GM12878 (cell line): ENCODE measurements at regions of chr10 and their contacts with region 1.

Region 1: GRCh38 chr10:114388275-114388674 is 16.0 kb downstream of the AFAP1L2 start:
- DNase-seq: peak; percentile 66
- ATAC-seq: peak; percentile 69
- H3K4me3 ChIP-seq: no peak overlapping the region
- H3K27ac ChIP-seq: peak overlapping the region; percentile 75
- H3K4me1 ChIP-seq: peaks cover 26% of the 10 kb centered on the region
- H3K27me3 ChIP-seq: no peaks in the 10 kb centered on the region
- CTCF ChIP-seq: no peak
- EP300 ChIP-seq: no peak
- POLR2A ChIP-seq: no peak
- RAD21 ChIP-seq: no peak

Region 2: GRCh38 chr10:114195079-114195478 is 193.2 kb before region 1 on chr10:
- CTCF ChIA-PET with region 1: no interaction called
- POLR2A ChIA-PET with region 1: no interaction called
- RAD21 ChIA-PET with region 1: no interaction called
- SMC1A ChIA-PET with region 1: no interaction called
- in situ Hi-C with region 1: no loop called
- intact Hi-C with region 1: no loop called
- DNase-seq: no peak
- ATAC-seq: peak; percentile 80
- H3K4me3 ChIP-seq: no peak overlapping the region; the same call in 1 of the 2 replicates
- H3K27ac ChIP-seq: no peak overlapping the region
- H3K4me1 ChIP-seq: no peaks in the 10 kb centered on the region
- H3K27me3 ChIP-seq: no peaks in the 10 kb centered on the region; a peak in 1 of 4 replicates
- CTCF ChIP-seq: no peak
- EP300 ChIP-seq: no peak; a peak in 1 of 4 replicates
- POLR2A ChIP-seq: no peak
- RAD21 ChIP-seq: no peak

Region 3: DNA sequence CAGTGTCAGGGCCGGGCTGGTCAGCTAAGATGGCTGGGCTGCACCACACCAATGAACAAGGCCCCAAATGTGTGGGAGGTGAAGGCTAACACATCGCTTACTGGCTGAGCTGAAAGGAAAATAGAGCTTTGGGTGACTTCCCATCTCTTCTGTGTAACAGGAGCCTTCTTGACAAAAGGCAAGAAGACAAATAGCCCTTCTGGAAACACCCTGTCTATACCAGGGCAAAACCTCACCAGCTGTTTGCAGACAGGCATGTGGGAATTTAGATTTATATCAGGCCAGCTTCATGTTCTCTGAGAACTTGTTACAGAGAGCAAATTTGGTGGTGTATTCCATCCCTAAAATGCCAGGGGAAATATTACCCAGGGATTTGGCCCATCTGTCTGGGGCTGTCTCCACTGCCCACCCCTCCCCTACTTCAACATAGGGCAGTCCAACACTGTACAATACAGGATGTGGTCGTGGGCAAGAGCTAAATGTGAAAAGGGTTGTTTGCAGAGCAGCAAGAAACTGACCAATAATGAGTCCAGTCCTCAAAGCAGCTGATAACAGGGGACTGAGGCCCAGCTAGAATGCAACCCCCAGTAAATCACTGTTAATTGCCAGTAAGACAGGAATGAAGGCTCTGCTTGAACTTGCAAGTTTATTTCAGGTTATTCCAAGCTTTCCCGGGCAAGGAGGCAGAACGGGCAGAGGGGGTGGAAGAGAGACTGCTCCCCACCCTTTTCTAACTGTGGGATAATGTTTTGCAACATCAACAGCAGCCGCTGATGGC is 21.0 kb before region 1 on chr10:
- CTCF ChIA-PET with region 1: interaction called, 4 read pairs
- POLR2A ChIA-PET with region 1: no interaction called
- RAD21 ChIA-PET with region 1: interaction called, 8 read pairs
- SMC1A ChIA-PET with region 1: interaction called, 17 read pairs
- in situ Hi-C with region 1: no loop called
- intact Hi-C with region 1: no loop called
- DNase-seq: no peak
- ATAC-seq: peak; percentile 85
- H3K4me3 ChIP-seq: no peak overlapping the region
- H3K27ac ChIP-seq: no peak overlapping the region
- H3K4me1 ChIP-seq: peaks cover 10% of the 10 kb centered on the region
- H3K27me3 ChIP-seq: no peaks in the 10 kb centered on the region
- CTCF ChIP-seq: no peak
- EP300 ChIP-seq: no peak
- POLR2A ChIP-seq: no peak
- RAD21 ChIP-seq: no peak

Region 4: DNA sequence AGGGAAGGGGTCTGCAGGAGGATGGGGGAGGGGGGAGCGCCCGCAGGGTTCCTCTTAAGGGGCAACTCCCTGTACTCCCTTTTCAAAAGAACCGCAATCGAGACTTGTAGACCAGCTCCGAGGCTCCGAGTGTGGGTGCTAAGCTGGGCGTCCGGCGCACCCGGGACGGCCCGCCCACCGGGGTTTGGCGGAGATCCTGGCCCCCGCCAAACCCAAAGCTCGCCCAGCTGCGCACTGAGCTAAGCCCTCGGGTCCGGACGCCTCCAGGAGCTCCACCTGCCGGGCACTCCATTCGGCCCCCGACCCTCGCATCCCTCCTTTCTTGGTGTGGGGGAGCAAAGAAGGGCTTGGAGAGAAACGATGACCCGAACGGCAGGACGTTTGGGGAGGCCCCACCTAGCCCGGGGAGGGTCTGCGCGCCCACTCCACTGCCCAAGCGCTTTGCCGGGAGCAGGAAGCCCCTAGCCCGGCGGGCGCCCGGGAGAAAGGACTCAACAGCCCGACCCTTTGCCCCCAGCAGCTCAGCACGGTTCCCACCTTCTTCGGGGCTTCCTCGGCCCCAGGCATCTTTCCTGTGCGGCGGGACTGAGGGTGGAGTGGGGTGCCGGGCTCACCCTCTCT is 15.4 kb after region 1 on chr10:
- CTCF ChIA-PET with region 1: interaction called, 12 read pairs
- POLR2A ChIA-PET with region 1: interaction called, 3 read pairs
- RAD21 ChIA-PET with region 1: interaction called, 27 read pairs
- SMC1A ChIA-PET with region 1: interaction called, 26 read pairs
- in situ Hi-C with region 1: no loop called
- intact Hi-C with region 1: no loop called
- DNase-seq: no peak
- ATAC-seq: peak; percentile 50
- H3K4me3 ChIP-seq: peak overlapping the region; percentile 40; the same call in 1 of the 2 replicates
- H3K27ac ChIP-seq: peak overlapping the region; percentile 8; the same call in 1 of the 2 replicates
- H3K4me1 ChIP-seq: peaks cover 8% of the 10 kb centered on the region
- H3K27me3 ChIP-seq: peaks cover 5 to 7% of the 10 kb centered on the region in 2 experiments; a peak in 3 of 4 replicates
- CTCF ChIP-seq: no peak; a peak in 1 of 6 replicates
- EP300 ChIP-seq: no peak
- POLR2A ChIP-seq: no peak
- RAD21 ChIP-seq: peak; percentile 23; the same call in 1 of the 2 replicates

Region 5: GRCh38 chr10:114519284-114519624 is 131.0 kb after region 1 on chr10:
- CTCF ChIA-PET with region 1: no interaction called
- POLR2A ChIA-PET with region 1: no interaction called
- RAD21 ChIA-PET with region 1: no interaction called
- SMC1A ChIA-PET with region 1: no interaction called
- in situ Hi-C with region 1: no loop called
- intact Hi-C with region 1: no loop called
- DNase-seq: no peak
- ATAC-seq: no peak
- H3K4me3 ChIP-seq: no peak overlapping the region
- H3K27ac ChIP-seq: no peak overlapping the region
- H3K4me1 ChIP-seq: no peaks in the 10 kb centered on the region
- H3K27me3 ChIP-seq: no peaks in the 10 kb centered on the region; a peak in 1 of 4 replicates
- CTCF ChIP-seq: no peak
- EP300 ChIP-seq: no peak
- POLR2A ChIP-seq: no peak
- RAD21 ChIP-seq: no peak